Activated B cell treated with CpG ODN at 0.5 μM for 24 hours (primary cell): ENCODE measurements at regions of chr1 and their contacts with region 1.

Region 1: DNA sequence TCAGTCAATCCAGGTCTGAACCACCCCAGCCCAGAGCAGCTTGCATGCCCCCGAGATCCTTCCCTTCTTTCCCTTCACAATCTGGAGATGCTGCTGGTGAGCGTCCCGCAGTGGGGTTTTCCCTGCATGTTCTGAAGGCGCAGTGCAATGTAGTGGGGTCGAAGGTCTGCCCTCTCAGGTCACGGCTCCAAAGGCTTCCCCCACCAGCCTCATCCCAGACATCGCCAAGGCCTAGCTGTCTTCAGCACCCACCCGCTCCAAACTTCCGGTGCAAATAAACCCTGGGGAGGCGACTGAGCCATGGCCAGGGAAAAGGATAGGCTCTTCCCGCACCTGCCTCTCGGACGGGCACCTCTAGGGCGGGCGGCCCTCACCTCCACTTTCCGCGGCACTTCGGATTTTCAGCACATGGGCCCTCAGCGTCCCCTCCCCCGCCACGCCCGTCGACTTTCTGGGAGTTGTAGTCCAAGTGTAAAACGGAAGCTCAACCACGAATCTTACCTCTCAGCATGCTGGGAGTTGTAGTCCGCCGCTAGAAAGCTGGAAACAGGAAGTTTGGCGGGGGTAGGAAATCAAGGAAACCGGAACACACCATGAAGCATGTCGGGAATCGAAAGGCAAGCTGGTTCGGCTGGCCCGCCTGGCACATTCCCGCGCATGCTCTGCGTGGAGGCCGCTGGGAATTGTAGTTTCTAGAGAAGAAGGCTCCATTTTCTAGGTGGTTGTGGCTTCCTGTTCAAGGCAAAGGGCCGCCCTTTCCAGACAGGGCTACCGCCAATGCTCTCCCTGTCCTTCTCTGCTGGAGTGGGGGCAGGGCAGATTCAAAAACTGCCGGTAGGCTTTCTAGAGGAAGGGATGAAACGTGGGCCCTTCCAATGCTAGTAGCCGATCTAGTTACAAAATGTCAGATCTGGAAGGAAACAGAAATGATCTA is at the start of gene MRPL24:
- DNase-seq: peak; percentile 87
- ATAC-seq: peak; percentile 89
- H3K4me3 Mint-ChIP-seq: peak within 1 kb of the TSS; percentile 98
- H3K27ac Mint-ChIP-seq: peak within 1 kb of the TSS; percentile 97
- H3K4me1 Mint-ChIP-seq: peaks cover 33% of the 10 kb centered on the region
- H3K27me3 Mint-ChIP-seq: no peaks in the 10 kb centered on the region
- CTCF ChIP-seq: no peak
- total RNA-seq, gene MRPL24: 65.8 and 83.7 TPM in 2 replicates

Region 2: DNA sequence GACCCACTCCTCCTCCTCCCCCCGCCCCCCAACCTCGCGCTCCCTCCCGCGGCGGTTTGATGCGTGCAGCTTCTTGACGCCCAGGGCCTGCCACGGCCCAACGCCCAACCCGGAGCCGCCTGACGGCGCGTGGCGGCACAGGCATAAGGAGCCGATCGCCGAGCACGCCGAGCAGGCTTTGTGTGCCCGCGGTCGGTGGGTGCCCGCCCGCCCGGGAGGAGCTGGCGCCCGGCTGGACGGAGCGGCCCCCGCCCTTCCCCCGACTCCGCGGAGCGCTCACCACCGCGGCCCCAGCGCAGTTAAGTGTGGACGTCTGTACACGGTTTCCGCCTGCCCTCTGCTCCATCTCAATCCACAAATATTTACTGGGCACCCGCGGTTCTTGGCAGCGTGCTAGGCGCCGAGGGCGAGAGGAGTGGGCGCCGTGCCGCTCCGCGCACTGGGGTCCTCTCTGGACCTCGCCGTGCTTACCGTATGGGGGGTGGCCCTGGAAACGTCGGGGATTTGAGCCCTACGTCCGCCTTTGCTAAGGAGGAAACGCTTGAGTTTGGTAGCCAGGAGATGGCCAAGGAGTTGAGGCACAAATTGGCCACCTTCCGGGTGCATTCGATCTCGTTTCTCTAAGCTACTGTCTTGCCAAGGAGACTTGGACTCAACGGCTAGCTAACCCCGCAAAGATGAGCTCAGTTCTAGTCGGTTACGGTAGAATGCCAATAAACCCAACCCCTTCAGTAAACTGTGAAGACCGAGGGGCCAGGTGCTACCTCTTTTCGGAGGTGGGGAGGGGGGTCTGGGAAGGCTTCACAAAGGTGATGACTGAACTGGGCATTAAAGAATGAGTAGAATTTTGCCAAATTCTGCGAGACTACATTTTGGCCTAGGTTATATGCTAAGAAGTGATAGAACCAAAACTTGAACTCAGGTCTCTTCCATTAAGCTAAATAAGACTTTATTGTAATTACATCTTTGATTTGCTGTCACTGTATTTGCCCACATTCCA is 11.1 kb after region 1 on chr1:
- CTCF ChIA-PET with region 1: interaction called, 16 read pairs
- POLR2A ChIA-PET with region 1: interaction called, 91 read pairs
- intact Hi-C with region 1: loop called (anchors 1 kb)
- DNase-seq: peak; percentile 89
- ATAC-seq: peak; percentile 85
- H3K4me3 Mint-ChIP-seq: peak overlapping the region; percentile 93
- H3K27ac Mint-ChIP-seq: peak overlapping the region; percentile 92
- H3K4me1 Mint-ChIP-seq: peaks cover 62% of the 10 kb centered on the region
- H3K27me3 Mint-ChIP-seq: no peaks in the 10 kb centered on the region
- CTCF ChIP-seq: no peak